Naive thymus-derived CD4-positive, alpha-beta T cell (primary cell): ENCODE measurements at regions of chr12 and their contacts with region 1.

Region 1: DNA sequence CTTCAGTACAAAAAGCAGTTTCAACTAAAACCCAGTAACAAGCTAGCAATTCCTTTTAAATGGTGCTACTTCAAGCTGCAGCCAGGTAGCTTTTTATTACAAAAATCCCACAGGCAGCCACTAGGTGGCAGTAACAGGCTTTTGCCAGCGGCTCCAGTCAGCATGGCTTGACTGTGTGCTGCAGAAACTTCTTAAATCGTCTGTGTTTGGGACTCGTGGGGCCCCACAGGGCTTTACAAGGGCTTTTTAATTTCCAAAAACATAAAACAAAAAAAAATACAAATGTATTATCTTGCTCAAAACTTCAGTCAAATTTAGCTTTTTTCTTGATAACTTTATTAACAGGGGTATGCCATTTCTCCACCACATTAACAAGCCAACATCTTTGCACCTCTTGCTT is 3.6 kb upstream of the CLEC4E start:
- DNase-seq: peak; percentile 45 to 78 (median 67)
- ATAC-seq: peak; percentile 85
- H3K4me3 ChIP-seq: no peak overlapping the region
- H3K4me3 Mint-ChIP-seq: peak overlapping the region in 4 of 10 donors; percentile 25 to 58 (median 34)
- H3K27ac ChIP-seq: no peak overlapping the region
- H3K27ac Mint-ChIP-seq: no peak overlapping the region
- H3K4me1 ChIP-seq: no peaks in the 10 kb centered on the region
- H3K4me1 Mint-ChIP-seq: peaks cover 0 to 10% (median 0%) of the 10 kb centered on the region in 7 donors
- H3K27me3 ChIP-seq: no peaks in the 10 kb centered on the region
- H3K27me3 Mint-ChIP-seq: peaks cover 13 to 44% (median 26%) of the 10 kb centered on the region in 5 donors

Region 2: DNA sequence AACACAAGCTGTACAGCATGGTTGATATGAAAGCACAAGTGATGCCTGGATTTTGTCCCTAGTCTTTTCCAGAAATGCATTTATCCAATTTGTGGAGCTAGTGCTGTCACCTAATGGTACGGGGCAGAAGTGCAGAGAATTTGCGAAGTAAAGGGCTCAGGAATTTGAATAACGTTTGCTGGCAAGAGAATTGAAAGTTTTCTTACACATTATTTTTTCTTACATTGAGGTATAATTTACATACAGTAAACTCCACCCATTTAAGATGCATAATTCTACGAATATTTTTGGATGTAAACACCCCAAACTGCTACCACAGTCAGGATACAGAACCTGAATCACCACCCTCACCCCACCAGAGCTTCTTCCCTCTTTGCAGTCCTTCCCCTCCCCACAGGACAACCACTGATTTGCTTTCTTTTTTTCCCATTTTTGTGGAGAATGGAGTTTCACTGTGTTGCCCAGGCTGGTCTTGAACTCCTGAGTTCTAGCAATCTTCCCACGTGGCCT is 64.8 kb after region 1 on chr12:
- CTCF ChIA-PET with region 1: interaction called, 14 read pairs
- POLR2A ChIA-PET with region 1: no interaction called
- intact Hi-C with region 1: loop called (anchors 1 to 5 kb)
- DNase-seq: peak in 2 of 9 donors; percentile 3
- ATAC-seq: peak; percentile 40
- H3K4me3 ChIP-seq: no peak overlapping the region
- H3K4me3 Mint-ChIP-seq: peak overlapping the region; percentile 60 to 84 (median 73)
- H3K27ac ChIP-seq: no peak overlapping the region
- H3K27ac Mint-ChIP-seq: peak overlapping the region in 2 of 9 donors; percentile 33 to 38
- H3K4me1 ChIP-seq: no peaks in the 10 kb centered on the region
- H3K4me1 Mint-ChIP-seq: peaks cover 9 to 14% (median 10%) of the 10 kb centered on the region in 7 donors
- H3K27me3 ChIP-seq: no peaks in the 10 kb centered on the region
- H3K27me3 Mint-ChIP-seq: peaks cover 5 to 32% (median 11%) of the 10 kb centered on the region in 5 donors

Region 3: DNA sequence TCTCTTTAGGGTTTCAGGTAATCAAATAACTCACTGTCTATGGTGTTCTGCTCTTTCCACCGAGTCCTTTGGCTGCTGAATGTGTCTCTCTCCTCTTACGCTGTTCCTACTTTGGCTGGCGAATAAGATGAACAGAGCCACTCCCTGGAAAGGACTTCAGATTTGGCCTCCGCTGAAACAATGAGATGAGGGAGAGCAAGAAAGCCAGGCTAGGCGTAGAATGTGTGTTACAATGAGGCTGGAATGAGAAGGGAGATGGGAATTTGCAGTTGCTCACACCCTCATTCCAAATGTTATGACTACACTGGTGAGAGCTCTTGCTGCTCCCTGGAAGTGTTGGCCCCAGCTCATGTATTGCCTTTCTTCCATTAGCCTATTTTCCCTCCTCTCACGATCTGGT is 118.3 kb after region 1 on chr12 and contains the start of gene MFAP5:
- CTCF ChIA-PET with region 1: interaction called, 3 read pairs
- POLR2A ChIA-PET with region 1: no interaction called
- intact Hi-C with region 1: loop called in 1 of 2 experiments (anchors 1 kb)
- DNase-seq: no peak
- ATAC-seq: no peak
- H3K4me3 ChIP-seq: no peak within 1 kb of the TSS
- H3K4me3 Mint-ChIP-seq: no peak within 1 kb of the TSS
- H3K27ac ChIP-seq: no peak within 1 kb of the TSS
- H3K27ac Mint-ChIP-seq: no peak within 1 kb of the TSS
- H3K4me1 ChIP-seq: no peaks in the 10 kb centered on the region
- H3K4me1 Mint-ChIP-seq: peaks cover 0 to under 1% (median 0%) of the 10 kb centered on the region in 7 donors
- H3K27me3 ChIP-seq: no peaks in the 10 kb centered on the region
- H3K27me3 Mint-ChIP-seq: peaks cover 5 to 16% (median 8%) of the 10 kb centered on the region in 5 donors
- total RNA-seq, gene MFAP5: not detected

Region 4: GRCh38 chr12:8681041-8681902 is 137.0 kb after region 1 on chr12:
- CTCF ChIA-PET with region 1: interaction called, 3 read pairs
- POLR2A ChIA-PET with region 1: interaction called, 3 read pairs
- intact Hi-C with region 1: loop called in 1 of 2 experiments (anchors 1 kb)
- DNase-seq: no peak
- ATAC-seq: no peak
- H3K4me3 ChIP-seq: no peak overlapping the region
- H3K4me3 Mint-ChIP-seq: no peak overlapping the region
- H3K27ac ChIP-seq: no peak overlapping the region
- H3K27ac Mint-ChIP-seq: no peak overlapping the region
- H3K4me1 ChIP-seq: no peaks in the 10 kb centered on the region
- H3K4me1 Mint-ChIP-seq: peaks cover 0 to 5% (median 0%) of the 10 kb centered on the region in 7 donors
- H3K27me3 ChIP-seq: no peaks in the 10 kb centered on the region
- H3K27me3 Mint-ChIP-seq: peaks cover 0 to 14% (median 0%) of the 10 kb centered on the region in 5 donors

Region 5: GRCh38 chr12:8823565-8824300 is 279.4 kb after region 1 on chr12:
- CTCF ChIA-PET with region 1: no interaction called
- POLR2A ChIA-PET with region 1: no interaction called
- intact Hi-C with region 1: loop called in 1 of 2 experiments (anchors 2 kb)
- DNase-seq: peak in 4 of 9 donors; percentile 3 to 8 (median 4)
- ATAC-seq: no peak
- H3K4me3 ChIP-seq: no peak overlapping the region
- H3K4me3 Mint-ChIP-seq: no peak overlapping the region
- H3K27ac ChIP-seq: no peak overlapping the region
- H3K27ac Mint-ChIP-seq: no peak overlapping the region
- H3K4me1 ChIP-seq: no peaks in the 10 kb centered on the region
- H3K4me1 Mint-ChIP-seq: no peaks in the 10 kb centered on the region
- H3K27me3 ChIP-seq: no peaks in the 10 kb centered on the region
- H3K27me3 Mint-ChIP-seq: peaks cover under 1 to 12% (median 7%) of the 10 kb centered on the region in 5 donors

Region 6: DNA sequence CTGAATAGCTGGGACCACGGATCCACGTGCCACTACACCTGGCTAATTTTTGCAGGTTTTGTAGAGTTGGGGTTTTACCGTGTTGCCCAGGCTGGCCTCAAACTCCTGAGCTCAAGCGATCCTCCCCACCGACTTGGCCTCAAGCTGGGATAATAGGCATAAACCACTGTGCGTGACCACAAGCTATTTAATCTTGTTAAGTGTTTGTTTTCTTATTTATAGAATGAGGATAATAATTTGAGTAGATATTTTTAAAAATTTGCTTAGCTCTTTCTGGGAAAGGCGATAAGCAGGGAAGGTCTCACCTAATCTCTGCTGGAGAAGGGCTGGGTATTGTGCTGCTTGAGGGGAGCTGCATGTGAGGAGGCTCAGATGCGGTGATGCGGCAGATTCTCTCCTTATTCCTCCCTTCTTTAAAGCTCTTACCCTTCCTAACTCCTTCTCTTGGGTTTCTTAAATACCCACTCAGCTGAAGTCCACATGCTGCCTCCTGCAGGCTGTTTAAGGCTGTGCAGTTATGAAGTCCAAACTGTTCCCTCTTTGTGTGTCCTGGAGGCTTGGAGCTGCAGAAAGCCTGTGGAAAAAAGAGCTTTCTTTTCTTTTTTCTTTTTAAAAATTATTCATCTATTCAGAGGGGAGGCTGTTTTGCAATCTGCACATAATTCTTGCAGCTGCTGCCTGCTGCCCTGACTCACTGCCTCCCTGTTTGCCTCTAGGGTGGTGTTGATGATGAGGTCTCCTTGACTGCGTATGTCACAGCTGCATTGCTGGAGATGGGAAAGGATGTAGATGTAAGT is 316.1 kb after region 1 on chr12:
- CTCF ChIA-PET with region 1: interaction called, 12 read pairs
- POLR2A ChIA-PET with region 1: no interaction called
- intact Hi-C with region 1: loop called (anchors 1 kb)
- DNase-seq: peak in 6 of 9 donors; percentile 13 to 32 (median 13)
- ATAC-seq: peak; percentile 57
- H3K4me3 ChIP-seq: no peak overlapping the region
- H3K4me3 Mint-ChIP-seq: no peak overlapping the region
- H3K27ac ChIP-seq: no peak overlapping the region
- H3K27ac Mint-ChIP-seq: no peak overlapping the region
- H3K4me1 ChIP-seq: no peaks in the 10 kb centered on the region
- H3K4me1 Mint-ChIP-seq: no peaks in the 10 kb centered on the region
- H3K27me3 ChIP-seq: no peaks in the 10 kb centered on the region
- H3K27me3 Mint-ChIP-seq: peaks cover 0 to 2% (median 0%) of the 10 kb centered on the region in 5 donors

Region 7: DNA sequence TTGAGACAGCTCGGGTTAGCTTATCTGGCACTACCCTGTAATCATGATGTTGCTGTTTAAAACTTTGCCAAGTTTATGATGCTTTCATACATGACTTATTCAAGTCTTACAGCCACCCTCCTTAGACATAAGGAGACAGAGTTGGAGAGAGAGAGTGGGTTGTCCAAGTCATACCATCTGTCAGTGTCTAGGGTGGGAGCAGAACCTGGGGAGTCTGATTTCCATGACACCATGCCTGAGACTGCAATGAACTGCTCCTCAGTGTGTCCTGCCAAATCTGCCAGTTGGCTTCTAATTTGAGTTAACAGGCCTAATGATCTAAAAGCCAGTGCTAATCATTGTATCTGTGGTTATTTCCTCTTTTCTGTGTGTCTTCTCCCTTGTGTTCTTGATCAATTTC is 326.3 kb after region 1 on chr12:
- CTCF ChIA-PET with region 1: no interaction called
- POLR2A ChIA-PET with region 1: no interaction called
- intact Hi-C with region 1: no loop called
- DNase-seq: no peak
- ATAC-seq: no peak
- H3K4me3 ChIP-seq: no peak overlapping the region
- H3K4me3 Mint-ChIP-seq: no peak overlapping the region
- H3K27ac ChIP-seq: no peak overlapping the region
- H3K27ac Mint-ChIP-seq: no peak overlapping the region
- H3K4me1 ChIP-seq: no peaks in the 10 kb centered on the region
- H3K4me1 Mint-ChIP-seq: no peaks in the 10 kb centered on the region
- H3K27me3 ChIP-seq: no peaks in the 10 kb centered on the region
- H3K27me3 Mint-ChIP-seq: peaks cover 0 to 5% (median 0%) of the 10 kb centered on the region in 5 donors

Region 8: GRCh38 chr12:8890313-8891085 is 346.2 kb after region 1 on chr12:
- CTCF ChIA-PET with region 1: interaction called, 9 read pairs
- POLR2A ChIA-PET with region 1: no interaction called
- intact Hi-C with region 1: loop called (anchors 1 kb)
- DNase-seq: peak; percentile 29 to 78 (median 61)
- ATAC-seq: peak; percentile 91
- H3K4me3 ChIP-seq: peak overlapping the region; percentile 71
- H3K4me3 Mint-ChIP-seq: peak overlapping the region; percentile 77 to 100 (median 90)
- H3K27ac ChIP-seq: peak overlapping the region; percentile 59
- H3K27ac Mint-ChIP-seq: peak overlapping the region in 8 of 9 donors; percentile 8 to 92 (median 80)
- H3K4me1 ChIP-seq: no peaks in the 10 kb centered on the region
- H3K4me1 Mint-ChIP-seq: peaks cover 0 to 12% (median 5%) of the 10 kb centered on the region in 7 donors
- H3K27me3 ChIP-seq: no peaks in the 10 kb centered on the region
- H3K27me3 Mint-ChIP-seq: peaks cover 0 to 27% (median 0%) of the 10 kb centered on the region in 5 donors